ENCODE measurements at regions of chr14 and their contacts with region 1.

Region 1: DNA sequence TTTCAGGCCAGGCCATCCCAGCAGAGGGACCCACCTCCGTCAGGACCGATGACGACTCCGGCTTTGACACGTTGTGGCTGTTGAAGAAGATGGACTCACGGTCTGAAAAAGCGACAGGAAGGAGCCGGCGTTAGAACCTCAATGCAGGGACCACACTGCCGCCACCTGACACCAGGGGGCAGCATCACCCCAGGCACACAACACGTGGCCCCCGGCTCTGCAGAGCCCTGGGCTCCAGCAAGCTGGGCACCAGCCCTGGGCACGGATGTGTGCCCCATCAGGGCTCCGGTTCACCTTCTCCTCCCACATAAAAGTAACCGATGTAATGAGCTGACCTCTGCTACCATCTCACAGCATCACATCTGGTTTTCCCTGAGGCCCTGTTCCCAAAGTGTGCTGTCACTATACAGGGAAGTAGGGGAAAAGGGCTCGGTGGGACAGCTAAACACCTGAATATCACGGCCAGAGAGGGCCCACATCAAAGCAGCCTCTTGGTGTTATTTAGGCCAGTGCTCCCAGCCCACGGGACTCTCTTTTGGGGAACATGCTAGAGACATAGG is 29.0 kb downstream of the CHGA start:
- DNase-seq: peak; percentile 90
- ATAC-seq: peak; percentile 69

Region 2: DNA sequence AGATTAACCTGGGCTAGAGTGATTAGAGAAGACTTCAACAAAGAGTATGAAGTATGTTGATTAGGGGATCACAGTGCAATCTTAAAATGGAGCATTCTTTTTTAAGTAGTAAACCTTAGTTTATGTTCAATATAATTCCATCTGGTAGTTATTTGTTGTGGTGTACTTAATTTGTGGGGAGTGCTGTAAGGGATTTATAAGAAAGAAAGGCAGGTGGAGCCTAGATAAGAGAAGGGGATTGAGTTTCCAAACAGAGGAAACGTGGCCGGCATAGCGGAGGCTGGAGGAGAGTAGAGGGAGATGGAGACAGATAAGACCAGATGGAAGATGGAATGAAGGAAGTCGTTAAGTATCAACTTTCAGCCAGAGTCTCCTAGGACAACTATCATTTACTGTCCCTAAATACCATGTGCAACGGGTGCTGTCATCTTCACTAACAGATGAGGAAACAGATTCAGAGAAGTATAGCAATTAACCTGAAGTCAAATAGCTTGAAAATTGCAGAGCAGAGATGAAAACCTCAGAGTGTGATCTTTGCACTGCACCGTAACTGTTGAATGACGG is 119.8 kb before region 1 on chr14:
- intact Hi-C with region 1: no loop called
- DNase-seq: no peak
- ATAC-seq: no peak

Region 3: GRCh38 chr14:92880869-92881289 is 71.1 kb before region 1 on chr14:
- intact Hi-C with region 1: loop called (anchors 5 kb)
- DNase-seq: no peak
- ATAC-seq: peak; percentile 43

Region 4: DNA sequence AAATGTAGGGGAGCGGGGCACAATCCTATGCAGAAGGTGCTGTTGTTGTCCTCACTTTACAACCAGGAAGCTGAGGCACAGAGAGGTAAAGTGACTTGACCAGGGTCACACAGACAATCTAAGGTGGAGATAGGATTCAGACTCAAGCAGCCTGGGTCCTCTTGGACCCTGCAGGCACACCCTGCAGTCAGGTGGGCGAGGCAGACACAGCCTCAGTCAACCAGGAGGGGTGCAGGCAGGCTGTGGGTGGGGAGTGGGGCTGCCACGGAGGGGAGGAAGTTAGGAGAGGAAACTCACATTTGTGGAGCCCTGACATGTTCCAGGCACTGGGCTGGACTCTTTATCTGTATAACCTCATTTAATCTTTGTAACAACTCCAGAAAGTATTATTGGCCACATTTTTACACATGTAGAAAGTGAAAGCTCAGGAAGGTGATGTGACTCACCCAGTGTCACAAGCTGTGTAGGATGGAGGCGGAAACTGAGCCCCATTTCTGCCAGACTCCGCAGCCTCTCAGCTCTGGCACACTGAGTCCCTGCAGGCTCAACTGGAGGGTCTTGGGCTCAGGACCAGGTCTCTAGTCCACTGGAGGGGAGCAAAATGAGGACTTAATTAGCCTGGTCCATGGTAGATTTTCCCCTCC is 53.9 kb before region 1 on chr14:
- intact Hi-C with region 1: no loop called
- DNase-seq: no peak
- ATAC-seq: no peak

Region 5: DNA sequence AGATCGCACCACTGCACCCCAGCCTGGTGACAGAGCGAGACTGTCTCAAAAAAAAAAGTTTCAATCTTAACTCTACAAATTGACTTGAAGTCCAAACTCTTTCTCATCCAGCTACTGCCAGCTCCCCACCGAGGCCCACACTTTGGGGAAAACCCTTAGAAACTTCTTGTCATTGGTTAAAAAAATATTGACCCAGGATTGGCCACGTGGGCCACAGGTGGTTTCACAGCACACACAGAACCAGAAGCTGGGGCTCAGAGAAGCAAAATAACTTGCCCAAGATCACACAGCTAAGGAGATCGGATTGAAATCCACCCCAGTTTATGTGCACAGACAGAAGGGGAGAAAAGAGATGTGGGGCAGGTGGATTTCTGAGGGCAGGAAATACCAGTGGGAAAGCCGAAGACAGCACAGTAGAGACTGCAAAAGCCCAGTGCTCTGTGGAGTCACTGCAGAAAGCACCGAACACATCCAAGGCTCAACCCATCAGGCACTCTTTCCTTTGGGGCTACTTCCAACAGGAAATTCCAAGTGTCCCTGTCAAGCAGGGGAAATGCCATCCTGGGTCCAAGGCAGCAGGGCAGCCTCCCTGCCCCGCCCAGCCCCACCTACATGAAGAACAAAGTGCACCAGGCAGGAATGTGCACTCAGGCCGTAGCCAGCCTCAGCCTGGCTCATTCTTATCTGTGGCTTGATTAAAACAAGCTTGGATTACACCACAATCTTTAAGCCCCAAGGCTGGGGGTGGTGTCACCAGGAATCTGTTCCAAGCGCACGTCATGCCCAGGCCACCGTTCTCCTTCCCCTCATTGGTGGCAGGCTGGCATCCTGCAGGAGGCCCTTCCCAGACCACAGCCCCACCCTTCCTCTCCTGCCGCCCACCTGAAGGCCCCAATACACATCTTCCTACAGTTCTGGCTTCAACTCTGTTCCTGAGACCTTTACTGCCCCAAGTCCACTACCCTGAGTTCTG is 91.3 kb after region 1 on chr14:
- intact Hi-C with region 1: loop called (anchors 1 kb)
- DNase-seq: no peak
- ATAC-seq: peak; percentile 74

Region 6: GRCh38 chr14:93090826-93091555 is 139.0 kb after region 1 on chr14:
- intact Hi-C with region 1: no loop called
- DNase-seq: no peak
- ATAC-seq: peak; percentile 51

Region 7: DNA sequence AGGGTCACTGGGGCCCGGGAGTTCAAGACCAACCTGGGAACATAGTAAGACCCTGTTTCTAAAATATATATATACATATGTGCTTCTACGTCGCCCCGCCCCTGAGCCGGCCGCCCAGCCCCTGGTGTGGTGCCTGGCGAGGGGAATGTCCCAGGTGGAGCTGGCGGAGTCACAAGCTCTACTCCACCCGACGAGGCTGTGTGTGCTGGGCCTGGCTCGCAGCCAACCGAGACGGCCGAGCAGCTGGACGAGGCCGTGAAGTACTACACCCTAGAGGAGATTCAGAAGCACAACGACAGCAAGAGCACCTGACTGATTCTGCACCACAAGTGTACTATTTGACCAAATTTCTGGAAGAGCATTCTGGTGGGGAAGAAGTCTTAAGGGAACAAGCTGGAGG is 185.9 kb after region 1 on chr14:
- intact Hi-C with region 1: loop called (anchors 1 kb)
- DNase-seq: peak; percentile 77
- ATAC-seq: peak; percentile 73

Measured in Right ventricle myocardium inferior (tissue), 1 donor.